MCF 10A (cell line): ENCODE measurements at regions of chr20 and their contacts with region 1.

Region 1: GRCh38 chr20:17542993-17543412 is 11.8 kb upstream of the BFSP1 start:
- DNase-seq: peak; percentile 71
- H3K4me3 Mint-ChIP-seq: no peak overlapping the region
- H3K27ac Mint-ChIP-seq: no peak overlapping the region
- H3K4me1 Mint-ChIP-seq: peaks cover 27% of the 10 kb centered on the region
- H3K27me3 Mint-ChIP-seq: no peaks in the 10 kb centered on the region
- CTCF ChIP-seq: no peak

Region 2: GRCh38 chr20:16955971-16956370 is 587.0 kb before region 1 on chr20:
- CTCF ChIA-PET with region 1: no interaction called
- POLR2A ChIA-PET with region 1: no interaction called
- intact Hi-C with region 1: no loop called
- DNase-seq: no peak
- H3K4me3 Mint-ChIP-seq: no peak overlapping the region
- H3K27ac Mint-ChIP-seq: no peak overlapping the region
- H3K4me1 Mint-ChIP-seq: no peaks in the 10 kb centered on the region
- H3K27me3 Mint-ChIP-seq: no peaks in the 10 kb centered on the region
- CTCF ChIP-seq: no peak

Region 3: GRCh38 chr20:17315407-17316231 is 227.4 kb before region 1 on chr20:
- CTCF ChIA-PET with region 1: no interaction called
- POLR2A ChIA-PET with region 1: no interaction called
- intact Hi-C with region 1: no loop called
- DNase-seq: no peak
- H3K4me3 Mint-ChIP-seq: no peak overlapping the region
- H3K27ac Mint-ChIP-seq: no peak overlapping the region
- H3K4me1 Mint-ChIP-seq: no peaks in the 10 kb centered on the region
- H3K27me3 Mint-ChIP-seq: peaks cover 29% of the 10 kb centered on the region
- CTCF ChIP-seq: no peak

Region 4: DNA sequence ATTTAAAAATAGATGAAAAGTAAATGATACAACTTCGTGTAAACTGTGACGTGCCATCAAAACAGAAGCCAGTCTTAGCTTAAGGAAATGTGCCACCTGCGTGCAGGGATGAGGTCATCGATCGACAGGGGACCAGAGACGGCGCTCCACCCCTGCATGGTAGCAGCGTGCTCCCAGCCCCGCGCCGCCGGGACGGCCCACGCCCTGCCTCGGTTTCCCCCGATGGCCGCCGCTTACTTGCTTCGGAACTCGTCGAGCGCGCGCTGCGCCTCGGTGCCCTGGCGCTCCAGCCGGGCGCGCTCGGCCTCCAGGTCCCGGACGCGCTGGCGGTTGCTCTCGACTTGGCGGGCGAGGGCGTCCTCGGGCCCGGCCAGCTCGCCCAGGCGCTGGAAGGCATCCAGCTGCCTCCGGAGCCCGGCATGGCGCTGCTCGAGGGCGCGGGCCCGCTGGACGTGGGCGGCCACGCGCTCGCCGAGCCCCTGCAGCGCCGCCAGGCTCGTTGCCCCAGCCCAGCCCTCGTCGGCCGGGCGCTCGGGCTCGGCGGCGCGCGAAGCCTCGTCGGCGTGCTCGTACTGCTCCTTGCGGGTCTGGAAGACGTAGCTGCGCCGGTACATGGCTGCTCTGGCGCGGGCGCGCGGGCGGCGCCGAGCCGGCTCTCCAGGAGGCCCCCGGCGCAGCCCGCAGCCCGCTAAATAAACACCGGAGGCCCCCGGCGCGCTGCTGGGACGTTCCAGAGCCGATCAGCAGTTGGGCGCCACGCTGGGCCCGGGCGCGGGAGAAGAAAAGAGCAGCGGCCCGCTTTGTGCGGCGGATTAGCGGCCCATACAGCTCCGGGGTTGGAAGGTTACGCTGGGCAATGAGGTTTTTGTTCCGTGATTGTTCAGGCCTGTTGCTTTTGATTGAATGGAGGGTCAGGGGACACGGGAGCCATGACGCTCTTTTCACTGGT is 12.0 kb before region 1 on chr20 and contains the start of gene BFSP1:
- CTCF ChIA-PET with region 1: interaction called, 14 read pairs
- POLR2A ChIA-PET with region 1: interaction called, 8 read pairs
- intact Hi-C with region 1: no loop called
- DNase-seq: peak; percentile 38
- H3K4me3 Mint-ChIP-seq: peak within 1 kb of the TSS; percentile 69
- H3K27ac Mint-ChIP-seq: no peak within 1 kb of the TSS
- H3K4me1 Mint-ChIP-seq: no peaks in the 10 kb centered on the region
- H3K27me3 Mint-ChIP-seq: no peaks in the 10 kb centered on the region
- CTCF ChIP-seq: no peak
- total RNA-seq, gene BFSP1: 3.5 and 3.9 TPM in 2 replicates

Region 5: DNA sequence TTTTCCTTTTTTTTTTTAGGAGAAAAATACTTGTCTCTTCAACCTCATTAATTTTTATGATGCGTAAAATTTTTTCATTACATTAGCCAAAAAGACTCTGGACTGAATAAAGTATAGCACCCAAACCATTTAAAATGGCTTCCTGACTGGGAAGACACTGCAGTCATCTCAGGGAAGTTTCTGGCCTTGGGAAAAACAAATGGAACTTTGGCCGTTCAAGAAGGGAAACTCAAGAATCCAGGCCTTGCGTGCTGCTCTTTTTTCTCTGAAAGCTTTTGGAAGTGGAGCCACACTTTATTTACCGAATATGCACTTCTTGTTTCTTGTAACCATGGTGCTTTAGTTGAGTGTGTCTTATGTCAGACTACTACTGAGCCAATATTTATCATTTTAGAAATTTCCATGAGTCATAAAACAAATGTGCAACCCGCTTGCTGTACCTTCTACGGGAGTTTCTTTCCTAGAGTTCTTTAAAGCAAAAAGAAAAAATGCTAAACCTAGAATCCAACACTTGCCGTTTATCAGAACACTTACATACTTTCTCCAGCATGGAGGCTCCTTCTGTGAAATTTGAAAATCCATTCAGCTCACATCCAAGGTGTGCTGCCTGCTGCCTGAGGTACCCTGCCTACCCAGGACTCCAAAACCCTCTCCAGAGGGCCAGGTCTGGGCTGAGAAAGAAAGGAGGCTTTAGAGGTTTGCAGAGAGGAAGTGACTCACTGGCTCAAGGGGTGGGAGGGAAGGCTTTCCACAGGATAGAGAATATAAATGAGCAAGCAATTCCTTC is 15.3 kb after region 1 on chr20:
- CTCF ChIA-PET with region 1: interaction called, 55 read pairs
- POLR2A ChIA-PET with region 1: interaction called, 214 read pairs
- intact Hi-C with region 1: loop called (anchors 1 kb)
- DNase-seq: peak; percentile 89
- H3K4me3 Mint-ChIP-seq: peak overlapping the region; percentile 64
- H3K27ac Mint-ChIP-seq: peak overlapping the region; percentile 97
- H3K4me1 Mint-ChIP-seq: peaks cover 36% of the 10 kb centered on the region
- H3K27me3 Mint-ChIP-seq: no peaks in the 10 kb centered on the region
- CTCF ChIP-seq: no peak

Region 6: DNA sequence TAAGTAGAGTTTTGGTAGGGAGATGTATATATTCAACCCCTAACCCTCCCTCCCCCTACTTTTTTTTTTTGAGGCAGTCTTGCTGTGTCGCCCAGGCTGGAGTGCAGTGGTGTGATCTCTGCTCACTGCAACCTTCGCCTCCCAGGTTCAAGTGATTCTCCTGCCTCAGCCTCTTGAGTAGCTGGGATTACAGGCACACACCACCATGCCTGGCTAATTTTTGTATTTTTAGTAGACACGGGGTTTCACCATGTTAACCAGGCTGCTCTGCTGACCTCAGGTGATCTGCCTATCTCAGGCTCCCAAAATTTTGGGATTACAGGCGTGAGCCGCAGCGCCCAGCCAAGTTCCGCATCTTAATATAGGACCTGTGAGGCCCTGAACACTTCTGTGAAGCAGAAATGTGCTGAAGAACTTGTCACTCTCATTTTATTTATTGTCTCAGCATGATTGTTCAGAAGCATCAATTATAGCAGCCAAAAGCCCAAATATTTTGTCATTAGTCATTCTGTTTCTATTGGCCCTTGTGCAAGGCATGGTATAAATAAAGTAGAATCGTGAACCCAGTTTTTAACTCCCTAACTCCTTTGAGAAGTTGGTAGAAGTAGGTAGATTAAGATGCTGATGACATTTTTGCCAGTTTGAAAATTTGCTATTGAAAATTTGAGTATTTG is 46.3 kb after region 1 on chr20:
- CTCF ChIA-PET with region 1: interaction called, 4 read pairs
- POLR2A ChIA-PET with region 1: interaction called, 11 read pairs
- intact Hi-C with region 1: no loop called
- DNase-seq: peak; percentile 33
- H3K4me3 Mint-ChIP-seq: no peak overlapping the region
- H3K27ac Mint-ChIP-seq: no peak overlapping the region
- H3K4me1 Mint-ChIP-seq: peaks cover 44% of the 10 kb centered on the region
- H3K27me3 Mint-ChIP-seq: no peaks in the 10 kb centered on the region
- CTCF ChIP-seq: no peak

Region 7: DNA sequence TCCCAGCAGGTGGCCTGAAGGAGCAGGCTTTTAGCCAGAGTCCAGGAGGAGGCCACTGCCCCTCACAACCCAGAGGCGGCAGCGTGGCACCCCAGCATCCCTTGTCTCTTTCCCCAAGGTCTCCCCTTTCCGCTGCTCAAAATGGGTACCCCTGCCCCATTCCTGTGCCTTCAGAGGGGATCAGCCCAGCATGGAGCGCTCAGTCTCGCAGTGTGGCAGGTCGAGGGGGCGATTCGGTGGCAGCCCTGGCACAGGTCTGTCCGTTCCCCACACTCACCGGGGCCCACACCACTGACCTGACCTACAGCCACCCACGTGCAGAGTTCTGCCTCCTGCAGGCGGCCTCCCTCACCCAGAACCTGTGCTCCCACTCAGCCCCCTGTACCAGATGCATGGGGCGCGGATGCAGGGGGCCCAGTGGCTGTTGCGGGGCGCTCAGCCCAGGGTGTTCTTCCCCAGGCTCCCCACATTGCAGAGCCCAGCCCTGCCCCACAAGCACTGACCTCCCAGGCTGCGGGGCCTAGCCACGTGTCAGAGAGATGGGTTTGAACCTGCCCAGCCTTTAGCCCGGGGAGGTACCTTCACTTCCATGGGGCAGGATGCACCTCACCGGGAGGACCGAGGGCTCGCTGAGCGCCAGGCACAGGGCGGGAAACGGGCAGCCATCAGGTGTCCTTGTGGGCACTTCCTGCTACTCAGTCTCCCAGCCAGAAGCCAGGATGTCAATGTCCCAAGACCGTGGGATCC is 68.7 kb after region 1 on chr20:
- CTCF ChIA-PET with region 1: interaction called, 43 read pairs
- POLR2A ChIA-PET with region 1: interaction called, 15 read pairs
- intact Hi-C with region 1: no loop called
- DNase-seq: peak; percentile 68
- H3K4me3 Mint-ChIP-seq: no peak overlapping the region
- H3K27ac Mint-ChIP-seq: peak overlapping the region; percentile 93
- H3K4me1 Mint-ChIP-seq: peaks cover 7% of the 10 kb centered on the region
- H3K27me3 Mint-ChIP-seq: no peaks in the 10 kb centered on the region
- CTCF ChIP-seq: no peak